ENCODE measurements at regions of chr1 and their contacts with region 1.

Region 1: DNA sequence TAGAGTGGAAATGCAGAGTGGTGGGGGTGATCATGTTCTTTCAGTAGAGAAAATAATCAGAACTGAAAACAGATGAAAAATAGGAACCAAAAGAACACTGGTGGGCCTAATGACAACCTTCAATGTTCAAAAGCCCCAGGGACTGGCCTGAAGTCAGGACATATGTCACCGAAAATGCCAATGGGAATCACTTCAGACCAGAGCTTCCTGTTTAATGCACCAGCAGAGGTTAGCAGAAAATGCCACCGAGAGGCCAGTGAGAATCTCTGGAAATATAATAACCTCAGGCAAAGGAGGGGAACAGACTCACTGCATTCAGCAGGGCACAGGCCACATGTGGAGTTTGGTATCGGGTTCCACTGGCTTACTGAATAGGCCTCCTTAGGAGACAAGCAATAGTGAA is 15.9 kb upstream of the CD58 start:
- DNase-seq: peak; percentile 21
- ATAC-seq: no peak
- H3K4me3 ChIP-seq: no peak overlapping the region
- H3K27ac ChIP-seq: no peak overlapping the region
- H3K4me1 ChIP-seq: peaks cover 11% of the 10 kb centered on the region
- H3K27me3 ChIP-seq: no peaks in the 10 kb centered on the region
- CTCF ChIP-seq: no peak

Region 2: GRCh38 chr1:116348751-116349150 is 238.0 kb before region 1 on chr1:
- CTCF ChIA-PET with region 1: no interaction called
- POLR2A ChIA-PET with region 1: interaction called, 11 read pairs
- intact Hi-C with region 1: no loop called
- DNase-seq: no peak
- ATAC-seq: no peak
- H3K4me3 ChIP-seq: no peak overlapping the region
- H3K27ac ChIP-seq: no peak overlapping the region
- H3K4me1 ChIP-seq: no peaks in the 10 kb centered on the region
- H3K27me3 ChIP-seq: no peaks in the 10 kb centered on the region
- CTCF ChIP-seq: no peak

Region 3: DNA sequence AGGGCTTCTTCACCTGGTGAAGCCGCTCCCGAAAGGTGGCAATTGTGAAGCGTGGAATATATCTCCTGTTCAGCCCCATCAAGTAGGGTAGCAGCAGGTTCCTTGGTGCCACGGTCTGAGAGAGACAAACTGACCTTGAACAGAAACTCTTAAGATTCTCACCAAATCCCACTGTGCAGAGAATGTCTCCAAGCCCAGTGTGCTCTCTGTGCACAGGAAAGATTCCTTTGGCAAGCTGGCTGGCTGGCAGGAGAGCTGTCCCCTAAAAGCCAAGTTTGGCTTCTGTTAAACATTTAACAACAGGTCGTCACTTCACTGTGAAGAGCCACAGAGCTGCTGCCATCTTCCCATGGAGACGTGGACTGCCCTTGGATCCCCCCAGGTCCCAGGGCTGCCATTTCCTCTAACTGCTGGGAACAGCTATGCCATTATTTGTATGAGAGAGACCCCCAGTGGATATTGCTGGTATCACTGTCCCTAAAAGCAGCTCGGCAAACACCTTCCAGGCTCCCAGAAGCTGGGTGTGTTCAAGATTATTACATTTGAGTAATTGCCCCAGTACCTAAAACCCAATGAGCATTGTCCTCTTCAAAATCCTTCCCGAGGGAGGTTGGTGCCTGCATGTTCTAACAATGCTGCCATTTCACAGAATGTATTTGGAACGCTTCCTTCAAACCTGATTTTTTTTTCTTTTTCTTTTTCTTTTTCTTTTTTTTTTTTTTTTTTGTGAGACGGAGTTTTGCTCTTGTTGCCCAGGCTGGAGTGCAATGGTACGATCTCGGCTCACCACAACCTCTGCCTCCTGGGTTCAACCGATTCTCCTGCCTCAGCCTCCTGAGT is 87.7 kb before region 1 on chr1:
- CTCF ChIA-PET with region 1: no interaction called
- POLR2A ChIA-PET with region 1: no interaction called
- intact Hi-C with region 1: no loop called
- DNase-seq: peak; percentile 78
- ATAC-seq: peak; percentile 94
- H3K4me3 ChIP-seq: no peak overlapping the region
- H3K27ac ChIP-seq: no peak overlapping the region
- H3K4me1 ChIP-seq: peaks cover 18% of the 10 kb centered on the region
- H3K27me3 ChIP-seq: no peaks in the 10 kb centered on the region
- CTCF ChIP-seq: peak; percentile 92

Region 4: DNA sequence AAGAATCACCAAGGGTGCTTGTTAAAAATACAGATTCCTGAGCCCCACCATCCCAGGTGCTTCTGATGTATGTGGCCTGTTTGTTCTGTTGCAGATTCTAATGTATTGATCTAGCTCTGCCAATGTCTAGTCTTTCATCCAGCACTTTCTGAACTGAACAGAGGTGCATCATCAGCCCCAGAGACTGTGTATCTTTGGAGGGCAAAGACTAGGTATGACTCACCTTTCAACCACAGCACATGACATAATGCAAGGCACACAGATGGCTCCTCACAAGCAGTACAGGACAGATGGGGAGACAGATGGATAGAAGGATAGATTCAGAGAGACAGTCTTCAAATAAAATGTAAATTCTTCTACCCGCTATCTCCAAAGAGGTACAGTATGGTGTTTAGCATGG is 48.2 kb before region 1 on chr1:
- CTCF ChIA-PET with region 1: no interaction called
- POLR2A ChIA-PET with region 1: no interaction called
- intact Hi-C with region 1: no loop called
- DNase-seq: peak; percentile 78
- ATAC-seq: peak; percentile 73
- H3K4me3 ChIP-seq: no peak overlapping the region
- H3K27ac ChIP-seq: peak overlapping the region; percentile 91
- H3K4me1 ChIP-seq: peaks cover 41% of the 10 kb centered on the region
- H3K27me3 ChIP-seq: no peaks in the 10 kb centered on the region
- CTCF ChIP-seq: no peak